RWPE1 (cell line): ENCODE measurements at regions of chr20 and their contacts with region 1.

Region 1: DNA sequence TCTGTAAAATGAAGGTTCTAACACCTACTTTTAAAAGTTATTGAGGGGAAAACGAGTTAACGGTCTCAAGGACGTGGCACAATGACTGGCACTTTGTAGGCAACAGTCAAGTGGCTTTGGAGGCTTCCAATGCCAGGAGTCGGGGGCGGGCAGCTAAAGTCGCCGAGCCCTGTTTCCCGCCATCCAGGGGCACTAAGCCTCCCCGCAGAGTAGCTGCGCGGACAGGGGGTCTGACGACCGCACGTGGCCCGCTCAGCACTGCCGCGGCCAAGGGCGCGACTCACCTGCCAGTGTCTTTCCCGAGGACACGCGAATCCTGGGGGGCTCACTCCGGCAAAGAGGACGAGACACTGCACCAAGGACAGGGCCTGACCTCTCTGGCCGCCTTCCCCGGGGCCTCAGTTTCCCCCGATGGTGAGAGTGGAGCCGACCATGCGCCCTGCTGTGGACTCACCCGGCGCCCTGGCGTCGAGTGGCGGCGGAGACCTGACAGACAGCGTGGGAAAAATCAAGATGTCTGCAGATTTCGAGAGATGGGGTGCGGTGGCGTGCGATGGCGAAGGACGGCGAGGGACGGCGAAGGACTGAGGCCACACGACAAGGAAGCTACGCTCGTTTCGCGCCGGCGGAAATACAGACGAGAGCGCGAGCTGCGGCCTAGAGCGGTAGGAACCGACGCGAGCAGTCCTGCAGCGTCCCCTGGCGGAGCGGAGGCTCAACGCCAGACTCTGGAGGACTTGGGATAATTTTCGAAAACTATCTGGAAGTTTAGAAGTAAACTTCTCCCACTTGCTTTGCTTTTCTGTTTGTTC is at the start of gene SNHG17:
- DNase-seq: peak; percentile 82
- H3K27ac ChIP-seq: peak within 1 kb of the TSS; percentile 81
- CTCF ChIP-seq: peak; percentile 100

Region 2: DNA sequence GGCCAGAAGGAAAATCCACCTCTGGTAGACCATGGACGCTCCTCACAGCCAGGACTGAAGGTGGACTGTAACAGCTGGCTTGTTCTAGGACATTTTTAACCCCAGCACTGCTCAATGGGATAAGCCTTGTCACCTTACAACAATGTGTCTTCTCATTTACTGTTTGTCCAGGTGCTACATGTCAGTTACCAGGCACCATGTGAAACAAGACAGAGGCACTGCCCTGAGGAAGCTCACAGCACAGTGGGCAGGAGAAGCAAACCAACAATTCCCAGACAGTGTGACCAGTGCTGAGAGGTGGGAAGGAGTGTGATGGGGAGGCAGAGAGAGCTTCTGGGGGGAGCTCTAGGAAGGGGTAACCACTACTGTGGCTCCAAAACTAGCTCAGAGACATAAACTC is 10.5 kb before region 1 on chr20:
- CTCF ChIA-PET with region 1: interaction called, 10 read pairs
- POLR2A ChIA-PET with region 1: interaction called, 4 read pairs
- DNase-seq: no peak
- H3K27ac ChIP-seq: 0 out of 2 replicates have a peak overlapping the region, but pooled peaks have one; percentile 5
- CTCF ChIP-seq: no peak

Region 3: GRCh38 chr20:38446441-38447209 is 11.7 kb after region 1 on chr20:
- CTCF ChIA-PET with region 1: interaction called, 40 read pairs
- POLR2A ChIA-PET with region 1: interaction called, 23 read pairs
- DNase-seq: peak; percentile 94
- H3K27ac ChIP-seq: peak overlapping the region; percentile 67
- CTCF ChIP-seq: peak; percentile 99

Region 4: GRCh38 chr20:38472513-38473372 is 37.8 kb after region 1 on chr20 and contains the start of gene RALGAPB:
- CTCF ChIA-PET with region 1: interaction called, 10 read pairs
- POLR2A ChIA-PET with region 1: interaction called, 17 read pairs
- DNase-seq: peak; percentile 100
- H3K27ac ChIP-seq: peak within 1 kb of the TSS; percentile 84
- CTCF ChIP-seq: peak; percentile 78